Activated CD4-positive, alpha-beta memory T cell treated with anti-CD3 and anti-CD28 coated beads for 36 hours (primary cell): ENCODE measurements at regions of chr1 and their contacts with region 1.

Region 1: DNA sequence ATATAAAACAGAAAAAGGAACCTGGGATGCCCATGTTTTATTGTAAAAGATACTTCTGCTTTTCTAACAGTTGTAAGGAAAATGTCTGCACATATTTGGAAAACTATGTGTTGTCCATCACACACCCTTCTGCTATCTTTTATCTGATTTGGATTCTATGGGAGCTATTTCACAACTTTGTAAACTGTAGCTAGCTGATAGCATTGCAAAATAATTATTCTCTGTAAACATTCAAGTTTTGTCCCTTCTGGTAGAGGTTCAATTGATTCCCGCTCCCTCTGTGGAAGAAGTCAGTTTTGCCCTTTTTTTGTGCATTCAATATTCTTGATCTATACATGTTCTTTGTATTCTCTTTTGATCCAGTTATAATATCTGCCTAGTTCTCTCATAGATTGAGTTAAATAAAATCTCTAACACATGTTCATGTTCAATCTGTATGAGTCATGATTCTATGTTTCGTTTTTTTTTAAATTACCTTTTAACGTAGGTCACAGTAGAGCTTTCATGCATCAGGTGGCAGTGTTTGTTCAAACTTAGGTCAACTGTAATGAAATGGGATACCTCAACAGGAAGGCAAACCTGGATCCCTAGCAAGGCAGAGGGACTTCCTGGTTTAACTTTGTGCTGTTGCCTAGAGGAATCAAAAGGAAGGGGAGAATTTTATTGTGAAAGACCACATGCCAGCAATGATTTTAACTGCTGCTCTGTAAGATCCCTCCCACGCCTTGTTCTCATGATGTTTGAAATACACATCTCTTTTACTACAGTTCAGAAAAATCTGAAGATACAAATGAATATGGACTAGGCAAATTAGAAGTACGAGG is 26.0 kb upstream of the BCL9 start:
- DNase-seq: no peak
- H3K4me3 Mint-ChIP-seq: no peak overlapping the region
- H3K27ac Mint-ChIP-seq: no peak overlapping the region
- H3K4me1 Mint-ChIP-seq: peaks cover 15% of the 10 kb centered on the region
- H3K27me3 Mint-ChIP-seq: peaks cover 2% of the 10 kb centered on the region

Region 2: DNA sequence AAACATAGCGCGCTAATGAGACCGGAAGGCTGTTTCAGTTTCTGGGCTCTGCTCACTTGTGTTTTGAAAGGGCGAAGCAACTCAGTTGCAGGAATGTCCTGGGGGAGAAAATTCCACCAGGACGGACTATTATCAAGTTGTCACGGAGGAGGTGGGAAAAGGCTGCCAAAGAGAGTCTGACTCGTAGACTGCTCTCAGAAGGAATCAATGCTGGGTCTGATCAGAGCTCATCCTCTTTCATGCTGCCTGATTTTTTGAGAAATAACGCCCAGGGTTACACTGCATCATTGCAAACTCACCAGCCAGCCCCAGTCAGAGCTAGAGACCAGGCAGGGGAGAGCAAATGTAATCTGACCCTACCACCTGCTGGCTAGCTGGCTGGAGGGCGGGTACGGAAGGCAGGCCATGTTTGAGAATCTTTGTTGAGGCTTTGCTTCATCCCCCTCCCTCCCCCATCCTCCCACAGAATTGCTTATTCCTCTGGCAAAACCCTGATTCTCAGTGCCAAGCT is 10.4 kb before region 1 on chr1:
- CTCF ChIA-PET with region 1: interaction called, 10 read pairs
- POLR2A ChIA-PET with region 1: no interaction called
- intact Hi-C with region 1: no loop called
- DNase-seq: no peak
- H3K4me3 Mint-ChIP-seq: no peak overlapping the region
- H3K27ac Mint-ChIP-seq: no peak overlapping the region
- H3K4me1 Mint-ChIP-seq: no peaks in the 10 kb centered on the region
- H3K27me3 Mint-ChIP-seq: no peaks in the 10 kb centered on the region

Region 3: DNA sequence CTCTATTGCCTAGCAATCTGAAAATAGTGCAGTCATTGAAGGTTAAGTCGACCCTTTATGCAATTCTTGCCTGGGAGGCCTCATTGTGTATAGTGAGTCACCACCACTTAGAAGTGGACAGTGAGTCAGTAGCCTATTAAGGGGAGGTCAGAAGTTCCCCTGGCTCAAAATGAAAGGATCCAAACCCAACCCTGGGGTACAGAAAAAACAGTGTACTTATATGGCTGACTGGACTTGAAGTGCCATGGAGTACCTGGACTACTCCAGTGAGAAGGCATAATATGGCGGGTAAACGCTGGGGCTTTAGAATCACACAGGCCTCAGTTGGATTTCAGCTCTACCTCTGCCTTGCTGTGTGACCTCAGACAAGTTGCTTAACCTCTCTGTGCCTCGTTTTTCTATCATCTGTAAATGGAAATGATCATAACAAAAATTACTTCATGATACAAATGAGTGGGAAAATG is 23.9 kb after region 1 on chr1:
- CTCF ChIA-PET with region 1: interaction called, 10 read pairs
- POLR2A ChIA-PET with region 1: no interaction called
- intact Hi-C with region 1: loop called (anchors 2 kb)
- DNase-seq: peak; percentile 31
- H3K4me3 Mint-ChIP-seq: no peak overlapping the region
- H3K27ac Mint-ChIP-seq: no peak overlapping the region
- H3K4me1 Mint-ChIP-seq: peaks cover 34% of the 10 kb centered on the region
- H3K27me3 Mint-ChIP-seq: no peaks in the 10 kb centered on the region

Region 4: GRCh38 chr1:147627435-147628110 is 112.3 kb after region 1 on chr1:
- CTCF ChIA-PET with region 1: interaction called, 33 read pairs
- POLR2A ChIA-PET with region 1: no interaction called
- intact Hi-C with region 1: loop called (anchors 1 kb)
- DNase-seq: peak; percentile 57
- H3K4me3 Mint-ChIP-seq: no peak overlapping the region
- H3K27ac Mint-ChIP-seq: no peak overlapping the region
- H3K4me1 Mint-ChIP-seq: peaks cover 24% of the 10 kb centered on the region
- H3K27me3 Mint-ChIP-seq: no peaks in the 10 kb centered on the region

Region 5: DNA sequence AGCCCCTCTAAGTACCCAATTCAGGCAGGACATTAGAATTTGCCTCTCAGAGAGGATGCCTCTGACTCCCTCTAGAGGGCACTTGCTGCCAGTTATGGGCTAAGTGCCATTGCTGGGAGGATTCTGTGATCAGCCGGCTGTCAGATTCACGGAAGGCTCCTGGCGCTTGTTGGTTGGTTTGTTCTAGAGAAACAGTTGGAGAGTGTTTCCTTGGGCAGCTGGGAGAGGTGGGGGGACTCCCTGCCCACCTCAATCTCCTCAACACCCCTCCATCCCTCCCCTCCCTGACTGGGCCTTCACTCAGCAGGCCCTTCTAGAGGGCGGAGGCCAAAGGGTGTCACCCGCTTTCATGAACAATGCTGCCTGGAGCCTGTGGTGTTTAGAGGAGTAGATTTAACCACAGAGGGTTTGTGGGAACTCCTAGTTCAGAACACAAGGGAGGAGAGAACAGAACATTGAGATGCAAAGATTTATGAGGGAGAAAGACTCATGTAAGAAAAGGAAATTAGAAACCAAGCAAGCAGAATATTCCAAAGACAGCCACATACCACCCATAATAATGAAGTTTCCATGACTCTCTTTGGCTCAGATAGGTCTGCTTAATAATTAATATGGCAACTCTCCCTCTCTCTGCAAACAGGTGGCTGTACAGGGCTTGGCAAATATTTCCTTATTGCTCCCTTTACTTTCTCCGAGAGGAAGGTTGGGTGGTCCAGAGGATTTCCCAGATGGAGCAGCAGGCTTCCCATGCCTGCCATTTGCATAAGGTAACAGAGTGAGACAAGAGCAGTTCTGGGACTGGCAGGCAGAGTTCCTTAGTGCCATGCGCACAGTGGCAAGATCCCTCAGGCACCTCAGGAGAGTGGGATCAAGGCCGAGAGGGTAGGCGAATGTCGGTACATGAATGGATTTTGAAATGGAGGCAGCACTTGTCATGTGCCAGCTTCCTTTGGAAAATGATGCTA is 185.1 kb after region 1 on chr1:
- CTCF ChIA-PET with region 1: interaction called, 5 read pairs
- POLR2A ChIA-PET with region 1: no interaction called
- intact Hi-C with region 1: loop called (anchors 5 kb)
- DNase-seq: peak; percentile 69
- H3K4me3 Mint-ChIP-seq: no peak overlapping the region
- H3K27ac Mint-ChIP-seq: peak overlapping the region; percentile 0
- H3K4me1 Mint-ChIP-seq: peaks cover 7% of the 10 kb centered on the region
- H3K27me3 Mint-ChIP-seq: peaks cover 4% of the 10 kb centered on the region